ENCODE measurements at regions of chr3 and their contacts with region 1.

Region 1: DNA sequence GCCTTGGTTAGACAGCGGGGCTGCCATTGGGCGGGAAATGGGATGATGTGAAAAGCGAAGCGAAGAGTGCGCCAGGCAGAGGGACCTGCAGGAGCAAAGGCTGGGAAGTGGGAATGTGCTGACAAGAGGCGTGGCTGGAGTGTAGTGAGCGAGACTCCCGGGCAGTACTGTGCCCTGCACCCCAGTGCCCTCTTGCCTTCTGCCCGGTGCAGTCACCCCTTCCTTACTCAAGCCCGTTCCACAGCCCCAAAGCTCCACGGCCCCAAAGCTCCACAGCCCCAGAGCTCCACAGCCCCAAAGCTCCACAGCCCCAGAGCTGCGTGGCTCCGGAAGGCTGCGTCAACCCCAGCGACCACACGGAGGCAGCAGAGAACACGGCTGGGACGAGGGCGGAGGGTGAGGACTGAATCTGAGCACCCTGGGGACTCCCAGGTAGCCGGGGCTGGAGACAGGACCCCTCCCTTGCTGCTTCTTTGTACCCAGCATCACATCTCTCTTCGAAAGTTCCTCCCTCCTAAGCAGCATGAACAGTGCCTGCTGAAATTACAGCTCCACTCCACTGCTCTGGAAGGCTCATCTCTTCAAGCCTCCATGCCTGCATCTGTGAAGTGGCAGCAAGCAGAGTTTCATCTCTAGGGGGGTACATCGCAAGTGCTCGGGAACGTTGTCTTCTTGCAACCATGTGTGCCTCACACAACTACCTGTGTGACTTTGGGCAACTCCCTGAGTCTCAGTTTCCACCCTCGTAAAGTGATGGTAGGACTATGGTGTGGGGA is 108.9 kb downstream of the FBLN2 start:
- DNase-seq: peak; percentile 26
- ATAC-seq: peak; percentile 91
- H3K4me3 ChIP-seq: no peak overlapping the region
- H3K27ac ChIP-seq: no peak overlapping the region
- H3K4me1 ChIP-seq: peaks cover under 1 to 23% of the 10 kb centered on the region in 2 experiments; a peak in 3 of 4 replicates
- H3K27me3 ChIP-seq: no peaks in the 10 kb centered on the region
- CTCF ChIP-seq: peak in 2 of 3 experiments; percentile 88 to 93; a peak in 4 of 6 replicates
- POLR2A ChIP-seq: no peak
- RAD21 ChIP-seq: no peak

Region 2: GRCh38 chr3:13495921-13496723 is 161.7 kb before region 1 on chr3:
- CTCF ChIA-PET with region 1: interaction called, 10 read pairs
- POLR2A ChIA-PET with region 1: no interaction called
- RAD21 ChIA-PET with region 1: no interaction called
- intact Hi-C with region 1: no loop called
- DNase-seq: peak; percentile 48
- ATAC-seq: peak; percentile 81
- H3K4me3 ChIP-seq: no peak overlapping the region
- H3K27ac ChIP-seq: no peak overlapping the region
- H3K4me1 ChIP-seq: peaks cover 0 to 11% of the 10 kb centered on the region in 2 experiments; a peak in 1 of 4 replicates
- H3K27me3 ChIP-seq: no peaks in the 10 kb centered on the region
- CTCF ChIP-seq: peak; percentile 93 to 96 (median 94)
- POLR2A ChIP-seq: no peak
- RAD21 ChIP-seq: peak; percentile 98

Region 3: DNA sequence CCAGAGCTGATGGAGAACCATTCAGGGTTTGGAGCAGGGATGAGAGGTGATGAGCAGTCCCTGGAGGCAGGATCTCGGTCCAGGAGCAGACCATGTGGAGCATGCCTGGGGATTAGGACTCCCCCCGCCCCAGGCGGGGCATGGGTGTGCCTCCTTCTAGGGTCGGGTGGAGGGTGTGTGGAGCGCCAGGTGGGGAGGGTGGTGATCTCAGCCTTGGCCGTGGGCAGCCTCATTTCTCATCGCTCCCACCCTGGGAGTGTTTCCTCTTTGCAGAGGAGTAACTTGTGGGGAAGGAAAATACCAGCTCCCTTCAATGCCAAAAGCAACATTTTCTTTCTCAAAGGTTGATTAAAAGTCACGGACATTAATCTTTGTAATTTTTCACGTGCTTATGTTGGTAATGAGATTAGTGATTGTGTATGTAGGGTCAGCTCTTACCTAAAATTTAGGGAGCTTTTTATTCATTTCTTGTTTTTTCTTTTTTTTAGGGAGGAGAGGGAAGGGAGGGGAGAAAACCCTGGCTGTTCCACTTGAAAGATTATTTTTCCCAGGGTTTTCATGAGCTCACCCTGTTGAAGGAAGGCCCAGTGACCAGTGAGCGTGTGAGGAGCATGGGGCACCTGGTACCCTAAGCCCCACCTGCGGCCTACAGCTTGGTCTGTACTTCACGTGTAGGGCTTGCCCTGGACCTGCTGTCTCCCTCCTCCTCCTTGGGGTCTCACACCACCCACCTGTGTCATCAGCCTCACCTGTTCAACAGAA is 97.9 kb before region 1 on chr3:
- CTCF ChIA-PET with region 1: no interaction called
- POLR2A ChIA-PET with region 1: no interaction called
- RAD21 ChIA-PET with region 1: no interaction called
- intact Hi-C with region 1: no loop called
- DNase-seq: no peak
- ATAC-seq: no peak
- H3K4me3 ChIP-seq: no peak overlapping the region
- H3K27ac ChIP-seq: no peak overlapping the region
- H3K4me1 ChIP-seq: peaks cover 0 to 4% of the 10 kb centered on the region in 2 experiments; a peak in 1 of 4 replicates
- H3K27me3 ChIP-seq: no peaks in the 10 kb centered on the region
- CTCF ChIP-seq: no peak
- POLR2A ChIP-seq: no peak
- RAD21 ChIP-seq: no peak

Region 4: DNA sequence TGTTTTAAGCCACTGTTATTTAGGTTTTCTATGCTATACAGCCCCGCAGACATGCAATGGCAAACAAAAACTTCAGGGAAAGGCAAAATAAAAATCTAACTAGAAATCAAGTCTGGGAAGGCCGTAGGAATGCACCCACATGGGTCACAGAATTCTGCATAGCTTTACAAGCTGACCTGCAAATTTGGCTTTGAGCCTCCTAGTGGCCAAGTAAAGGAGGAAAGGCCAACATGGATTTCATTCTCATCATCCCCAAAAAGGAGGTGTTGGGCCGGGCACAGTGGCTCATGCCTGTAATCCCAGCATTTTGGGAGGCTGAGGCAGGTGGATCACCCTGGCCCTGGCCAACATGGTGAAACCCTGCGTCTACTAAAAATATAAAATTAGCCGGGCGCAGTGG is 15.4 kb after region 1 on chr3:
- CTCF ChIA-PET with region 1: interaction called, 16 read pairs
- POLR2A ChIA-PET with region 1: no interaction called
- RAD21 ChIA-PET with region 1: interaction called in 1 of 2 experiments, 3 read pairs
- intact Hi-C with region 1: no loop called
- DNase-seq: no peak
- ATAC-seq: peak; percentile 77
- H3K4me3 ChIP-seq: no peak overlapping the region
- H3K27ac ChIP-seq: no peak overlapping the region
- H3K4me1 ChIP-seq: no peaks in the 10 kb centered on the region
- H3K27me3 ChIP-seq: peaks cover 28% of the 10 kb centered on the region; the same call in 1 of the 2 replicates
- CTCF ChIP-seq: peak; percentile 21 to 63 (median 61); a peak in 5 of 6 replicates
- POLR2A ChIP-seq: no peak
- RAD21 ChIP-seq: peak; percentile 31; the same call in 1 of the 2 replicates

Measured in HCT116 (cell line).